ENCODE measurements at regions of chr3 and their contacts with region 1.

Region 1: GRCh38 chr3:72339116-72340030 is 508.9 kb downstream of the SHQ1 start:
- DNase-seq: peak in 35 of 42 donors; percentile 15 to 74 (median 43)

Region 2: GRCh38 chr3:72279631-72280041 is 59.7 kb before region 1 on chr3:
- intact Hi-C with region 1: loop called (anchors 5 kb)
- DNase-seq: no peak